Activated CD4-positive, alpha-beta memory T cell treated with anti-CD3 and anti-CD28 coated beads, Interleukin-2, amount 10 ng/mL, durations not matched to agents 7 days and 5 days (primary cell): ENCODE measurements at regions of chr9 and their contacts with region 1.

Region 1: DNA sequence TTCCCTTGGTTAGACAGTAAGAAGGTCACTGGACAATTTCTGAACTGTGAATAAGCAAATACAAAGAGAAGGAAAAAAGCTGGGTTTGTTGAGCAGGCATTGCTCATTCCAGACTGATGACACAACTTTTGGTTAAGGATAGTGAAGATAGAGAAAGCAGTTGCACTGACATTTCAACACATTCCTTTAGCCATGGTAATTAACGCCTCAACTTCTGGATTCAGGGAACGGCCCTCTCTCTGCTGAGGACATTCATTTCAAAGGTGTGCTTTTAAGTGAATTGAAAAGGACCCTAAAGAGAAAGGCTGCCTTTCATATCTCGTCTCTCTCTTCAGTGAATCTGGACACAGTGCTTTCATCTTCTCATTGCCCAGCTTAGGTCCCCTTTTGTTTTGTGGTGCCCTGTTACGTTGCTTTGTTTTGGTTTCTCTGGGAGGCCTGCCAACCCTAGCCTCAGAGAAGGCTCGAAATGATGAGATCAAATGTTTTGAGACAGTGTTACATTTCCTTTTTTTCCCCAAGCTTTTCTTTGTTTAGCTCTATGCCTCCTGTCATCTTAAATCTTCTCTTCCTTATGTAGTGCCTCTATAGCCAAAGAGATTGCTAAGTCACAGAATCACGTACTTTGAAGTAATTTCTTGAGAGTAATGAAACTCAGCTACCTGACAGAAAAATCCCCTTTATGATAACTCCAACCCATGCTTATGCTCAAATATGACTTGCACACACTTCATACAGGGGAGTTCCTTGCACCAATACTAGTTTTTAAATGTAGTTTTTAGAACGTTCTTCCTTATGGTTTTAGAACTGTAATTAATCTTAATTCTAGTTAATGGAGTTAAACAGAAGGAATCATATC is 94.4 kb upstream of the IFNE start:
- DNase-seq: peak; percentile 17
- H3K4me3 Mint-ChIP-seq: no peak overlapping the region
- H3K27ac Mint-ChIP-seq: no peak overlapping the region
- H3K4me1 Mint-ChIP-seq: peaks cover 29% of the 10 kb centered on the region
- H3K27me3 Mint-ChIP-seq: peaks cover 18% of the 10 kb centered on the region

Region 2: DNA sequence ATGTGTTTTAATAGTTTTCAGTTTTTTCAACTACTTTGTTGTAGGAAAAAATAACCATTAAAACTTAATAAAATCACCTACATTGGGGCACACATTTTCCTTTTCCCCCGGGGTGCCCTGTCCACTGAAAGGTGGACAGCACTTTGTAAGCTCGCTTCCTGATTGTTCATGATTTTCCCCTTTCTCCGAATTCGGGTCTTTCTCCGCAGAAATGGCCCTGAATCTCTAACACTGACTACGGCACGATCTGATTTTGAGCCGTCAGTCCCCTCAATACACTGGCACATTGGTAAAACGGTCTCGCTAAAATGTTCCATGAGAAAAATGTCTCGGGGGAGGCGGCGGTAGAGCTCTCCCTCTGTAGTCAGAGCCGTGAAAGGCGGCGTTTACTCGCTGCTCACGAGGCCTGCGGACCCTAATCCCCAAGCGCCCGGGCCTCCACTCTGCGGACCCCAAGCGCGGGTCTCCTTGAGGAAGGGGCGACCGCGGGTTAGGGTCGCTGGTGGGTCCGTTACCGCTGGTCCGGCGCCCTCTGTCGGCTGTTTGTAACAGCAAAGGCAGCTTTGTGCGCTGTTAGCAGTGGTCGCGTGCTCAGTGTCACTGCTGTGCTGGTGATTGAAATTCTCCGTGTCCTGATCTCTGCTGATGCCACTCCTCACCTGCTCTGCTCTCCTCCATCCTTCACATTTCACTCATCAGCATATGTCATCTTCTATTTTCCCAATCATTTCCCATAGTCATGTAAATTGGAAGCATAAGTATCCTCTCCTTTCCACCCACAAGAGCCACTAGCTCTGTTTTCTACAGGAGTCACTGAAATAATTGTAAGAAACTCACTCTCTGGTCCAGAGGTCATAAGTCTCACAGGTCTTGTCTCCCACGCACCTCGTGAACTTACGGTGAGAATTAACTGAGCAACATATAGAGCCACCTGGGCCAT is 180.5 kb before region 1 on chr9:
- CTCF ChIA-PET with region 1: no interaction called
- POLR2A ChIA-PET with region 1: no interaction called
- DNase-seq: peak; percentile 56
- H3K4me3 Mint-ChIP-seq: peak overlapping the region; percentile 45
- H3K27ac Mint-ChIP-seq: no peak overlapping the region
- H3K4me1 Mint-ChIP-seq: peaks cover 5% of the 10 kb centered on the region
- H3K27me3 Mint-ChIP-seq: peaks cover 57% of the 10 kb centered on the region

Region 3: DNA sequence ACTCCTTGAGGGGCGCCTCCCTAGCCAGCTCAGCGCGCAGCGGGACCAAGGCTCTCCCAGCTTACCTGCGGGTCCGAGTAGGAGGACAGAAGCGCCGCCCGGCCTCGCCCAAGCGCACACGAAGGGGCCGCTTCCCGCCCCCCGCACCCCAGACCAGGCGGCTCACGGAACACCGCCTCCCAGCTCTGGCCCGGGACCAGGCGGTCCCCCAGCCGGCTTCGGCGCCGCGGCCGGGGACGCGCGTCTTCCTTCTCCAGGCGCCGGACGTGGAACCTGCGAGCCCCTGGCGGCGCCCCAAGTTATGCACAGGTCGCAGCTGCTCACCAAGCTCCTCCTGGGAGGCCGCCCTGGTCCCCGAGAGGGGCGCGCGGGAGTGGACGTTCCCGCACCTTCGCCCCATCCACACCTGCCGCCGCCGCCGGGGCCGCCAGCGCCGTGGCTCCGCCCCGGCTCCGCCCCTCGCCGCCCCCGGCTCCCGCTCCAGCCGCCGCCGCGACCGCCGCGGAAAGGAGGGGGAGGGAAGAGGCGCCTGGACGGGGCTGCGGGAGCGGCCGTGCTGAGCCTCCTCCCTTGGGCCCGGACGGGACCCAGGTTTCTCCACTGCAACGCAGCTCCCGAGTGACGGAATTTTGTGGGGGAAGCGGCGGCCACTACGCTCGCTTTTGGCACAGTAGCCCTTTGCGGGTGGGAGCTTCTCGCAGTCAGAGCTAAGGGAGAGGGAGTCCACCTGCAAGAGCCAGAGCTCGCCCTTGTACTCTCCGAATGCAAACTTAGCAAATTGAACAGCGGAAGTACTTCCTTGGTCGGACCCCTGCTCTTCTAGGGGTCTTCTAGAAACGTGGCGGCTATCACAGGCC is 16.9 kb before region 1 on chr9:
- CTCF ChIA-PET with region 1: interaction called, 3 read pairs
- POLR2A ChIA-PET with region 1: interaction called, 16 read pairs
- DNase-seq: peak; percentile 47
- H3K4me3 Mint-ChIP-seq: peak overlapping the region; percentile 83
- H3K27ac Mint-ChIP-seq: no peak overlapping the region
- H3K4me1 Mint-ChIP-seq: peaks cover 10% of the 10 kb centered on the region
- H3K27me3 Mint-ChIP-seq: peaks cover 59% of the 10 kb centered on the region

Region 4: DNA sequence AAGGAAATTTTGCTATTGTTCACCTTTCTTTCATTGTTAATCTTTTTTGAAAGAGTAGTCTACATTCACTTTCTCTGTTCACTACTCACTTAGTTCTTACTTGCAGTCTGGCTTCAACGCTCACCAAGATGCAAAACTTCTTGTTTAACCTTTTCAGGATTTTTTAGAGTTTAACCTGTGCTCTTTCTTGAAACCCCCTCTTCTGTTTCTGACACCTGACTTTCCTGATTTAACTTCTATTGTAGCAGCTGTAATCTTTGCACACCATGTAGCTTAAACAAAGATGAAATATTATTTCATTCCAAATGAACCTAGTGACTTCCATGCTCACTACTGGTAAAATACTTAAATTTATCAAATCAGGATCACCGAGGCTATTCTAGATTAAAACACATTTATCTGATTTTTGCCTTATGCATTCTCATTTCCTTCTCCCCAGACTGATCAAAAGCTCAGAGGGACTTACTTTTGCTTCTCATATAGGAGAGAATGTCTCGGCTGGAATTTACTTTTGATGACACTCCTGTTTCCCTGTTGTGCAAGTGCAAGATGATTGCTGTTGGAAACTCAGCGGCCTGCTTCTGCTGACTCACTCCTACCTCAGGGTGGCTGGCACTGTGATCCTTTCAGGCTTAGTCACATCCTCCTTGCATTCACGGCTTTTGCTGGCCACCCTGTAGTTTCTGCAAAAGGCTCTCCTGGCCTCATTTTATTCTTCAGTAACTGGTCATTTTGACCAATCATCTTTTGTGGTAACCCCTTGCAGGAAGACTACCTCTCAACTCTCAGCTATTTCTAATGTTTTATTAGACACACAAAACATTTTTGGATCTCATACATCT is 14.9 kb after region 1 on chr9:
- CTCF ChIA-PET with region 1: no interaction called
- POLR2A ChIA-PET with region 1: no interaction called
- DNase-seq: peak; percentile 63
- H3K4me3 Mint-ChIP-seq: no peak overlapping the region
- H3K27ac Mint-ChIP-seq: no peak overlapping the region
- H3K4me1 Mint-ChIP-seq: peaks cover 15% of the 10 kb centered on the region
- H3K27me3 Mint-ChIP-seq: peaks cover 16% of the 10 kb centered on the region